ENCODE measurements at regions of chr2 and their contacts with region 1.

Region 1: GRCh38 chr2:17899871-17900270 is 21.4 kb downstream of the KCNS3 start:
- DNase-seq: no peak

Region 2: GRCh38 chr2:16649353-16650286 is 1250.3 kb before region 1 on chr2:
- intact Hi-C with region 1: loop called in 1 of 2 experiments (anchors 5 kb)
- DNase-seq: no peak

Region 3: DNA sequence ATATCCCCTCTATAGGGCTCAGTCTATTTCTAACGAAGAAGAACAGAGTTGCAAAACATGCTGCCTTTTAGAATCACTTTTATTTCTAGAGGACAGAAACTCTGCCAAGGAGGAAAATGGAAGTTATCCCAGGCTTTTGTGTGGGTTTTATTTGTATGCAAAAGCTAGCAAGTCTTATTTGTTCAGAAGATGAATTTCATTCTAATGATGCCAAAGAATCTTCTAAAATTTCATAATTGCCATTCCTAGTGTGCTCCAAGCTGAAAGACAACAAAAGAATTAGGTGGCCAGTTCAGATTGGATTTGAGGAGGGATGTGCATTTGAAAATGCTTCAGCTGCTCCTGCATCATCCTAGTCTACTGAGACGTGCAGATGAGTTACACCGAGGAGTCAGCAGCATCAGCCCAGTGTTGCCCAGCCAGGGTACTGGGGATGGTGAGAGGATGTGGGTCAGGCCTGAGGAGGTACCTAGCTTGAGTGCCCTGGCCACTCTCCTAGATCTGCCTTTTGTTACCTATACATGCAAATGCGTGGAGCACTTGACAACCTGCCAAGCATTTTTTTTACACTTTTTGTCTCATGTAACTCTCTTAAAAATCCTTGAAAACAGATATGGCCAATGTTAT is 58.7 kb after region 1 on chr2:
- intact Hi-C with region 1: no loop called
- DNase-seq: no peak

Region 4: DNA sequence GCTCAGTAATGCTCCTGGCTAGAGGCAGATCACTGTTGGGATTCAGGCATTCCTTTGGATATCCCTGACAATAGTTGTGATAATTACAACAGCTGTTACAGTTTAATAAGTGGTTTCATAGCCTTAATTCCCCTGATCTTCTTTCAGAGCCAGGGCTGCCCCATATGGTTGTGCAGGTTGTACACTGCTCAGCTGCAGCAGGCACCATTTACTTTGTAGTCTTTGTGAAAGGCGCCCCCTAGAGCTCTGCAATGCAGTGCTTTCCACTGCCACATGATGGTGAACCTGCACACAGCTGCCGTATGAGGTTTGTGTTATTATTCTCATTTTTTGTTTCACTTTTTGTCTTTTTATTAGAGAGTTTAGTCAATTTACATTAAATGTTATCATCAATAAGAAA is 217.7 kb after region 1 on chr2:
- intact Hi-C with region 1: no loop called
- DNase-seq: no peak